B cell (primary cell): ENCODE measurements at regions of chr3 and their contacts with region 1.

Region 1: DNA sequence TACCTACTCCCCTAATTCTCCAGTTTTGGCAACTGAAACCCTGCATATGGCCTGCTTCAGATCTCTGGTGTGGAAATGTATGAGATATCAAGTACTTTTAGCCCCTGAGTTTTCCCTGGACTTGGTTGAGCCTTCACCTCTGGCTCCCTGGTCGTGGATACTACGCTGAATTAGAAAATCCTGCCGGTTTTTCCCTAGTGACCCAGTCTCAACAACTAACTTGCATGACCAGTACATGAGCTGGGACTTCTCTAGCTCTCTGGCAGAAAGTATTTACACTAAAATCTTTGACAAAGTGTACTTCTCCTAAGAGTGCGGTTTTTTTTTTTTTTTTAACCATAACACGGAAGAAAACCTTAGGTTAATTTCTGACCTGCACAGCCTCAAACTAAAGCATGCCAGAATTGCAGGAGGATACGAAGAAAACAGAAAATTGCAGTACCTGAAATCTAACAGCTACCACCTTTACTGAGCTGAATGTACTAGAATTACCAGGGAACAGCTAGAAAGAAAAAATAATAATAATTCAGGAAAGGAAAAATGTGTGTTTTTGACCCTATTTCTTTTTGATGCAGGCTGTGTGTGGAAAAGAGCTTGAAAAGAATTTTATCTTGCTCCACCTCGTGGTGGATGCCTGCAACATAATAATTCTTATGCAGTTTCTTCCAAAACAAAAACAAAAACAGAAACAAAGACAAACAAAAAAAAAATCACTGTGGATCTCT is 165.6 kb downstream of the GMNC start:
- DNase-seq: peak; percentile 35
- ATAC-seq: no peak
- H3K4me3 ChIP-seq: no peak overlapping the region
- H3K4me3 Mint-ChIP-seq: no peak overlapping the region
- H3K27ac ChIP-seq: no peak overlapping the region
- H3K27ac Mint-ChIP-seq: no peak overlapping the region
- H3K4me1 ChIP-seq: no peaks in the 10 kb centered on the region
- H3K4me1 Mint-ChIP-seq: no peaks in the 10 kb centered on the region
- H3K27me3 ChIP-seq: peaks cover 0 to 11% (median 4%) of the 10 kb centered on the region in 4 experiments
- H3K27me3 Mint-ChIP-seq: peaks cover 22% of the 10 kb centered on the region
- CTCF ChIP-seq: peak; percentile 68

Region 2: GRCh38 chr3:189961525-189962161 is 735.3 kb before region 1 on chr3:
- CTCF ChIA-PET with region 1: interaction called, 17 read pairs
- POLR2A ChIA-PET with region 1: no interaction called
- intact Hi-C with region 1: no loop called
- DNase-seq: peak; percentile 49
- ATAC-seq: peak; percentile 58
- H3K4me3 ChIP-seq: no peak overlapping the region
- H3K4me3 Mint-ChIP-seq: no peak overlapping the region
- H3K27ac ChIP-seq: no peak overlapping the region
- H3K27ac Mint-ChIP-seq: no peak overlapping the region
- H3K4me1 ChIP-seq: no peaks in the 10 kb centered on the region
- H3K4me1 Mint-ChIP-seq: peaks cover 1% of the 10 kb centered on the region
- H3K27me3 ChIP-seq: no peaks in the 10 kb centered on the region
- H3K27me3 Mint-ChIP-seq: peaks cover 16% of the 10 kb centered on the region
- CTCF ChIP-seq: peak; percentile 97

Region 3: DNA sequence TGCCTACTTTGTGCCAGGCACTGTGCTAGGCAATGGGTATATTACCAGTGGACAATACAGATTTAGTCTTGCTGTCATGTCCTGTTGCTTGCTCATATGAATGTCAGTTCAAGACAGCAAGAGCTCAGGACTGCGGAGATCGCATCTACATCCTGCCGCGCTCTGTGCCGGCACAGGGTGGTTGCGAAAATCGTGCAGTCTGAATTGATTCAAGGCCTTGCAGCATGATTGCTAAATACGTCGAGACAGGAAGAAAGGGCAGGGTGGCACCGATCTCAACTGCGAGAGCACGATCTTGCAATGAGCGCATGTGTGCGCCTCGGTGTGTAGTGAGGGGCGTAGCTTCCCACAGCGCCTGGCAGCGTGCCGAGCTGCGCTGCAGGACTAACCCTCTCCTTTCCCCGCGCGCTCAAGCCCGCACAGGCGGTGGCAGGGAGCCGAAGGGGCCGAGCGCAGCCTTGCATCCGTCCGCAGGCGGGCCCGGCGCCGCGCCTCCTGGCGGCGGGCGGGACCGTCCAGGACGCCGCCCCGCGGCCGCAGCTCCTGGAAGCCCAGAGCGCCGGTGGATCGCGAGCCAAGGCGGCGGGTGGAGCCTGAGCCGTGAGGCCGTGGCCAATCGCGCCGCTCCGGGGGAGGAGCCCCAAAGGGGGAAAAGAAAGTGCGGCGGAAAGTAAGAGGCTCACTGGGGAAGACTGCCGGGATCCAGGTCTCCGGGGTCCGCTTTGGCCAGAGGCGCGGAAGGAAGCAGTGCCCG is 183.4 kb before region 1 on chr3 and contains the start of gene IL1RAP:
- CTCF ChIA-PET with region 1: interaction called, 11 read pairs
- POLR2A ChIA-PET with region 1: no interaction called
- intact Hi-C with region 1: loop called (anchors 2 kb)
- DNase-seq: peak; percentile 91
- ATAC-seq: peak; percentile 95
- H3K4me3 ChIP-seq: peak within 1 kb of the TSS; percentile 87 to 96 (median 95)
- H3K4me3 Mint-ChIP-seq: peak within 1 kb of the TSS; percentile 90
- H3K27ac ChIP-seq: peak within 1 kb of the TSS; percentile 54 to 75
- H3K27ac Mint-ChIP-seq: peak within 1 kb of the TSS; percentile 86
- H3K4me1 ChIP-seq: peaks cover 13 to 17% of the 10 kb centered on the region in 2 donors
- H3K4me1 Mint-ChIP-seq: peaks cover 23% of the 10 kb centered on the region
- H3K27me3 ChIP-seq: peaks cover 0 to 3% (median 0%) of the 10 kb centered on the region in 4 experiments
- H3K27me3 Mint-ChIP-seq: peaks cover 6% of the 10 kb centered on the region
- CTCF ChIP-seq: peak; percentile 71
- total RNA-seq, gene IL1RAP: 11.5 and 13.4 TPM in 2 replicates

Region 4: GRCh38 chr3:190585805-190586630 is 110.9 kb before region 1 on chr3:
- CTCF ChIA-PET with region 1: no interaction called
- POLR2A ChIA-PET with region 1: no interaction called
- intact Hi-C with region 1: loop called (anchors 10 kb)
- DNase-seq: no peak
- ATAC-seq: no peak
- H3K4me3 ChIP-seq: no peak overlapping the region
- H3K4me3 Mint-ChIP-seq: peak overlapping the region; percentile 15
- H3K27ac ChIP-seq: no peak overlapping the region
- H3K27ac Mint-ChIP-seq: no peak overlapping the region
- H3K4me1 ChIP-seq: peaks cover 11 to 19% of the 10 kb centered on the region in 2 donors
- H3K4me1 Mint-ChIP-seq: peaks cover 21% of the 10 kb centered on the region
- H3K27me3 ChIP-seq: no peaks in the 10 kb centered on the region
- H3K27me3 Mint-ChIP-seq: no peaks in the 10 kb centered on the region
- CTCF ChIP-seq: no peak

Region 5: GRCh38 chr3:190684733-190685132 is 12.2 kb before region 1 on chr3:
- CTCF ChIA-PET with region 1: no interaction called
- POLR2A ChIA-PET with region 1: no interaction called
- intact Hi-C with region 1: no loop called
- DNase-seq: no peak
- ATAC-seq: no peak
- H3K4me3 ChIP-seq: no peak overlapping the region
- H3K4me3 Mint-ChIP-seq: no peak overlapping the region
- H3K27ac ChIP-seq: no peak overlapping the region
- H3K27ac Mint-ChIP-seq: no peak overlapping the region
- H3K4me1 ChIP-seq: no peaks in the 10 kb centered on the region
- H3K4me1 Mint-ChIP-seq: no peaks in the 10 kb centered on the region
- H3K27me3 ChIP-seq: no peaks in the 10 kb centered on the region
- H3K27me3 Mint-ChIP-seq: peaks cover 10% of the 10 kb centered on the region
- CTCF ChIP-seq: no peak

Region 6: GRCh38 chr3:190764231-190765134 is 67.5 kb after region 1 on chr3:
- CTCF ChIA-PET with region 1: no interaction called
- POLR2A ChIA-PET with region 1: no interaction called
- intact Hi-C with region 1: no loop called
- DNase-seq: no peak
- ATAC-seq: no peak
- H3K4me3 ChIP-seq: no peak overlapping the region
- H3K4me3 Mint-ChIP-seq: no peak overlapping the region
- H3K27ac ChIP-seq: no peak overlapping the region
- H3K27ac Mint-ChIP-seq: no peak overlapping the region
- H3K4me1 ChIP-seq: no peaks in the 10 kb centered on the region
- H3K4me1 Mint-ChIP-seq: no peaks in the 10 kb centered on the region
- H3K27me3 ChIP-seq: no peaks in the 10 kb centered on the region
- H3K27me3 Mint-ChIP-seq: no peaks in the 10 kb centered on the region
- CTCF ChIP-seq: no peak